Left colon (tissue), 2 donors: ENCODE measurements at regions of chr7 and their contacts with region 1.

Region 1: DNA sequence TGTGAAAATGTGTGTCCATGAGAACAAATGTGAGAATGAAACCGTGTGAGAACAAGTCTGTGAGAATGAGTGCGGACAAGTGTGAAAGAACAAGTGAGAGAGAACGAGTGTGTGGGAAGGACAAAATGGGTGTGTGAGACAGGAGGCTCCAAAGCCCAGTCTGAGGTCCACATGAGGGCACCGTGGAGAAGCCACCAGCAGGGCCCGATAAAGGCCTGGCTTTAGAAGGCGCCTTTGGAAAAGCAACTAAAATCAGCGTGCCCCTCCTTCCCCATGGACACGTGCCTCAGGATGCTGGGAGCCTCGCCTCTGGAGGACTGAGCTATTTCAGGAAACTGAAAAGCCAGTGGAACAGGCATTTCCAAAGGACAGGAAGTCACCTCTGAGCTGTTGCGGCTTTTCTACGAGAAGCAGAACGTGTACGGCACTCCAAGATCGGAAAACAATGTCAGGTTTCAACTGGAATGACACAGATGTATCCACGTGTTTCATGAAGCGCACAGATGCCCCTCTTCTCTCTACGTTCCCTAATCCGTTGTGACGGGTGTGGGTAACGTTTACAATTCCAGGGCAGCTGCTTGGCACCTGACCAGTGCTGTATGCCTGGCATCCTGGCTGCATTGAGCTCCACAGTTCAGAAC is 46.4 kb downstream of the ESYT2 start:
- DNase-seq: peak; percentile 23 to 64
- ATAC-seq: peak; percentile 5

Region 2: GRCh38 chr7:158818325-158819213 is 35.7 kb after region 1 on chr7:
- intact Hi-C with region 1: loop called in 1 of 2 experiments (anchors 5 kb)
- DNase-seq: peak; percentile 72 to 92
- ATAC-seq: peak; percentile 80

Region 3: GRCh38 chr7:158863611-158864506 is 81.0 kb after region 1 on chr7:
- intact Hi-C with region 1: loop called in 1 of 2 experiments (anchors 10 kb)
- DNase-seq: peak; percentile 86 to 88
- ATAC-seq: peak; percentile 81